Cardiac septum (tissue), 1 donor: ENCODE measurements at regions of chr15 and their contacts with region 1.

Region 1: DNA sequence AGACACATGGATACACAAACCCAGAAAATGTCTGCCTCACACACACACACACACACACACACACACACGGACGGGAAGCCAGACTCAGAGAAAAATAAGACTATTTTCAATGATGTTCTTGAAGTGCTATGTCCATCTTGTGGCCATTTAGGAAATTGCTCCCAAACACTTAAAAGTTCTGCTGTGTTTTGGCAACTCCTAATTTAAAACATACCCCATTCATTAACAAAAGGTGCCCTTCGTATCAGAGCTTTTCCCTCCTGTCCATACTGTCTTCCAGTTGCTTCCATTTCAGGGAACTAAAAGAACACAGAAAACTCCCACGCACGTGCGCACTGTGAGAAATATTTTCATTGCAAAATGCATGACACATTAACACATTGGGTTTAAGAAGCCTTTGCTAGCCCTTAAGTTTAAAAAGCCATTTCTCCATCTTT is 44.6 kb downstream of the SLC12A1 start:
- DNase-seq: no peak

Region 2: GRCh38 chr15:48112242-48112641 is 138.4 kb before region 1 on chr15:
- intact Hi-C with region 1: loop called (anchors 5 kb)
- DNase-seq: no peak

Region 3: DNA sequence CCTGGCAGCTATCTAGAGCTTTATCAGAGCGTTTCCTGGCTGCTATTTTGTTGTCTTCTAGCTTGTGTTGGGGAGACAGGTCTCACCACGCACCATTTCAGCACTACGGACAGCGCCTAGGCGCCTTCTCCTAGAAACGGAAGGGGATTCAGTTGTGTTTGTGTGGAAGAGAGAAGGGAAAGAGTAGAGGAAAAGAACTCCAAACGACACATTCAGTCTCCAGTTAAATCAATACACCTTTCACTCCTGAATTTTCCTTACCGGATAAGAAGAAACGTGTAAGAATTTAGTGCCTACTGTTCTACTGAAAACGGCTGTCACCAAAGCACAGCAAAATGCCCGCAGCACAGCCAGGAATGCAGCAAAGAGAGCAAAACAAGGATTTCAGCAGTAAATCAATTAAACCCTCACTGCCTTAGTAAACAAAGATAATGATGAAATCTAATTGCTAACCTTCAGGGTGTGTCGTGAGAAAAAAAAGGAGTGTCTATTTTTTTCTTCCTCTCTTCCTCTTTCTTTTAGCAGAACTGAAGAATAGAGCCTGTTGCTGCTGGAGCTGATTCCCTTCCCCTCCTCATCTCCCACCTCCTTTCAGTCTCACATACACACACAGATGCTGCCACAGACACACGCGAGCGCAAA is 59.6 kb before region 1 on chr15:
- intact Hi-C with region 1: no loop called
- DNase-seq: peak; percentile 75

Region 4: DNA sequence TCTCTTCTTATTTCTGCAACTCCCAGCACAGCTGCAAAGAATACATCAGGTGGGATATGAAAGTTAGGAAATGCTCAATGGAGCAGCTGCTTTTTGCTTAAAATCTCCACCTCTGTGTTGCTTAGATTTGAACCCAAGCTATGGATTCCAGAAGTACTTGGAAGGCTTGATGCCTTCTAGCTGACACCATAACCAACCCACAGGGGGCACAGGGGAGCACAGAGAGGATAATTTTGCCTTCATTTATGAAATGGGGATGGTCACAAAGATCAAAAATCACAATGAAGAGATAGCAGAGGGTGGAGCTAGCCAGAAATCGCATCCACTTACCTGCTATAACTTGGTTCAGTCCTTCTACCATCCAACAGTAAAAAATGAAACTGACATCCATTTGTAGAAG is 156.3 kb after region 1 on chr15:
- intact Hi-C with region 1: no loop called
- DNase-seq: no peak